ENCODE measurements at regions of chr19 and their contacts with region 1.

Region 1: GRCh38 chr19:47209319-47210179 is 21.4 kb downstream of the BBC3 start:
- DNase-seq: no peak
- H3K4me3 ChIP-seq: no peak overlapping the region
- H3K27ac ChIP-seq: no peak overlapping the region
- H3K4me1 ChIP-seq: peaks cover 6% of the 10 kb centered on the region
- H3K27me3 ChIP-seq: no peaks in the 10 kb centered on the region
- CTCF ChIP-seq: no peak
- POLR2A ChIP-seq: no peak

Region 2: GRCh38 chr19:47094557-47095475 is 114.7 kb before region 1 on chr19:
- intact Hi-C with region 1: no loop called
- DNase-seq: no peak
- H3K4me3 ChIP-seq: no peak overlapping the region
- H3K27ac ChIP-seq: peak overlapping the region; percentile 43 to 61
- H3K4me1 ChIP-seq: peaks cover 35% of the 10 kb centered on the region
- H3K27me3 ChIP-seq: no peaks in the 10 kb centered on the region
- CTCF ChIP-seq: no peak
- POLR2A ChIP-seq: no peak

Region 3: GRCh38 chr19:47157431-47158321 is 51.9 kb before region 1 on chr19:
- intact Hi-C with region 1: loop called (anchors 10 kb)
- DNase-seq: peak; percentile 27
- H3K4me3 ChIP-seq: no peak overlapping the region
- H3K27ac ChIP-seq: peak overlapping the region; percentile 2 to 56
- H3K4me1 ChIP-seq: peaks cover 14% of the 10 kb centered on the region
- H3K27me3 ChIP-seq: no peaks in the 10 kb centered on the region
- CTCF ChIP-seq: no peak
- POLR2A ChIP-seq: no peak